Endothelial cell of umbilical vein (primary cell): ENCODE measurements at regions of chr5 and their contacts with region 1.

Region 1: DNA sequence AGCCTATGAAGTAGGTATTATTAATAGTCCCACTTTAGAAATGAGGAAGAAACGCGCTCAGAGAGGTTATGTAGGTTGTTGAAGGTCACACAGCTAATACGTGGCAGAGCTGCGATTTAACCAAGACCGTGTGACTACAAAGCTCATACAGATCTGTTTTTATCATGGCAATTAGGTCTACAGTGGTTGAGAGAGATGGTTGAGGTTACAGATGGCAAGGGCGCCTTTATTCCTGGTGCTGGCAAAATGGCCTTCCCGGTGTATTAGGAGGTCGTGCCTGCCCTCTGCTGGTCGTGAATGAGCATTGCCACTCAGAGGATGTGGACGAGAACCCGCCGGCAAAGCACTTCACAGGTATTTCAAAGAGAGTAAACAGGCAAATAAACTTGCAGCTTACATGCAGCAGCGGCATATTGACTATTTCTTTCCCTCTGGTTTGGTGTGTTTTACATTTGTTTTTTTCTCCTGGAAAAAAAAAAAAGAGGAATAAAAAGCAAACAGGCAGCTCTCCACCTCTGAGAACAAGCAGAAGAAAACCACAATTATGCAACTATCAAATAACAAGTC is 65.3 kb upstream of the EGFLAM start:
- DNase-seq: peak; percentile 57
- H3K4me3 ChIP-seq: no peak overlapping the region
- H3K27ac ChIP-seq: no peak overlapping the region
- H3K4me1 ChIP-seq: no peaks in the 10 kb centered on the region
- H3K27me3 ChIP-seq: peaks cover 10 to 28% of the 10 kb centered on the region in 2 experiments
- CTCF ChIP-seq: peak; percentile 82 to 89
- POLR2A ChIP-seq: no peak

Region 2: GRCh38 chr5:37598733-37599132 is 594.4 kb before region 1 on chr5:
- CTCF ChIA-PET with region 1: no interaction called
- POLR2A ChIA-PET with region 1: no interaction called
- dilution Hi-C with region 1: no loop called
- intact Hi-C with region 1: loop called (anchors 10 kb)
- DNase-seq: no peak
- H3K4me3 ChIP-seq: no peak overlapping the region
- H3K27ac ChIP-seq: no peak overlapping the region
- H3K4me1 ChIP-seq: no peaks in the 10 kb centered on the region
- H3K27me3 ChIP-seq: no peaks in the 10 kb centered on the region
- CTCF ChIP-seq: no peak
- POLR2A ChIP-seq: no peak

Region 3: DNA sequence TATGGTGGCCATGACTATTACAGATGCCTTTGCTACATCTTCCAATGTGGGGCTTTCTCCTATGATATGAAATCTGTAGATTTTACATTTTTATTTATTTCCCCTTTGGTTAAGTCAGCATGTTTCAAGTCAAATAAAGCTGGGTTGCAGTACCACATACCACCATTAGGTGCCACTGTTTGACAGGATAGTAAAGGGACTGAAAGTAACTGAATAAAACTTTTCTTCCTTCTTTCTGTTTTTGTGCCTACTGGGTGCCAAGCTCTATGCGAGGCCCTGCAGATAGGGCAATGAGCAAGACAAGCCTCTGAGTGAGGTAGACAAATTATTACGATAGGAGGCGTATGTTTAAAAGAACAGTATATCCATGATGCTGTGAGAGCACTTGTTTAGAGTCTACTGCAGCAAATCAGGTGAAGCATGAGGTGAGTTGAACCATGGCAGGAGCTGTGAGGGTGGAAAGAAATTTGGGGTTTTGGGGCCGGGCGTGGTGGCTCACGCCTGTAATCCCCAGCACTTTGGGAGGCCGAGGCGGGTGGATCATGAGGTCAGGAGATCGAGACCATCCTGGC is 418.1 kb before region 1 on chr5:
- CTCF ChIA-PET with region 1: no interaction called
- POLR2A ChIA-PET with region 1: no interaction called
- dilution Hi-C with region 1: no loop called
- intact Hi-C with region 1: loop called (anchors 10 kb)
- DNase-seq: no peak
- H3K4me3 ChIP-seq: no peak overlapping the region
- H3K27ac ChIP-seq: no peak overlapping the region
- H3K4me1 ChIP-seq: no peaks in the 10 kb centered on the region
- H3K27me3 ChIP-seq: no peaks in the 10 kb centered on the region
- CTCF ChIP-seq: peak; percentile 33 to 48
- POLR2A ChIP-seq: no peak

Region 4: GRCh38 chr5:37837414-37838032 is 355.6 kb before region 1 on chr5:
- CTCF ChIA-PET with region 1: interaction called, 58 read pairs
- POLR2A ChIA-PET with region 1: no interaction called
- dilution Hi-C with region 1: no loop called
- intact Hi-C with region 1: loop called (anchors 1 kb)
- DNase-seq: peak; percentile 57
- H3K4me3 ChIP-seq: peak overlapping the region in 1 of 3 experiments; percentile 14
- H3K27ac ChIP-seq: no peak overlapping the region
- H3K4me1 ChIP-seq: peaks cover 24% of the 10 kb centered on the region
- H3K27me3 ChIP-seq: peaks cover 84 to 96% of the 10 kb centered on the region in 2 experiments
- CTCF ChIP-seq: peak; percentile 68 to 86
- POLR2A ChIP-seq: no peak